HEK293 (cell line): ENCODE measurements at regions of chr20 and their contacts with region 1.

Region 1: DNA sequence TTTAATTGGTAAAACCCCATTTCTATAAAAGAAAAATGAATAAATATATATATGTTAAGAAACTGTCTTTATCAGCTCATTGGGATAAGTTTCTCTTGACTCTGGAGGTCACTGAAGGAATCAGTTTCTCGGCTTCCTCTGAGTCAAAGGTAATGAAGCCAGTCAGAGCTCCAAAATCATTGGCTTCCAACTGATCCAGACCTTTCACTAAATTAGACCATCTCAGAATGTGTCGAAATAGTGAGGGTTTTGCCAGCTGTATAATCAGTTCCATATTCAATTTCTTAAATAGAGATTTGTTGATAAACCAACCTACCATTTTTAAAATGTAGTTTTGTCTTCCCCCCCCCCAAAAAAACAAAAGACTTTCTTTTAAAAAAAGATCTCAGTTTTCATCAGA is 60.5 kb upstream of the SRSF6 start:
- H3K4me3 ChIP-seq: no peak overlapping the region
- H3K27ac ChIP-seq: no peak overlapping the region
- H3K4me1 ChIP-seq: no peaks in the 10 kb centered on the region
- CTCF ChIP-seq: no peak

Region 2: GRCh38 chr20:43408848-43409576 is 11.9 kb after region 1 on chr20:
- CTCF ChIA-PET with region 1: interaction called, 12 read pairs
- POLR2A ChIA-PET with region 1: no interaction called
- H3K4me3 ChIP-seq: no peak overlapping the region
- H3K27ac ChIP-seq: no peak overlapping the region
- H3K4me1 ChIP-seq: no peaks in the 10 kb centered on the region
- CTCF ChIP-seq: no peak

Region 3: DNA sequence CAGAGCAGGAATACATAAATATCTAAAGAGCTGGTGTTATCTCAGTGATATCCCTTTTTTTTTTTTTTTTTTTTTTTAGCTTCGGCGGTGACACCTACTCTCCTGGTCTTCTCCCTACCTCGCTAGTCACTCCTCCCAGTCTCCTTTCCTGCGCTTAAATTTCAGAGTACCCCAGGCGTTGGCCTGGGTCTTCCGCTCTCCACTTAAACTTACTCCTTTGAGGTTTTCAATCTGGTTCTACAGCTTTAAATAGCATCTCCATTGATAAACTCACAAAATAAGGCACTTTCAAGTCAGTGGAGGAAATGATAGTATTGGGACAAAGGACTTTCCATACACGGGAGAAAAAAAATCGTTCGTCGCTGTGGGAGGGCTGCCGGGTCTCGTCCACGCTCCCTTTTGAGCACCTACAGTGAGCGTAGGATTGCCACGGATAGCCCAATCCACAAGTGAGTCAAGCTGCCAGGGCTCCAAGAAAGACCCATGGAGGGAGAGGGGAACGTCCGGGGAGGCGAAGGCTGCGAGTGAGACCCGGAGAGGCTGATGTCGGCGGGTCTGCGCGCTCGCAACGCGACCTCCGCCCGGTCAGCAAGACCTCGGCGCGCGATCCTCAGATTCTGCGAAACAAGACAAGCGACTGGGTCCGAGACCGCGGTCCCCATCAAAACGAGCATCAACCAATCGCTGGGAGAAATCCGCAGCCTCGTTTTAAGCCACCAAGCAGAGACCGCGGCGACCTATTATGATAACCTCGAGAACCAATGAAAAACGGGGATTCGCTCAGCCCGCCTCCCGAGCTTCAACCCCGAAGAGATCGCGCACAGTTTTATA is 59.9 kb after region 1 on chr20:
- CTCF ChIA-PET with region 1: no interaction called
- POLR2A ChIA-PET with region 1: no interaction called
- H3K4me3 ChIP-seq: peak overlapping the region; percentile 91
- H3K27ac ChIP-seq: peak overlapping the region; percentile 99
- H3K4me1 ChIP-seq: no peaks in the 10 kb centered on the region
- CTCF ChIP-seq: no peak